MCF 10A (cell line): ENCODE measurements at regions of chr2 and their contacts with region 1.

Region 1: DNA sequence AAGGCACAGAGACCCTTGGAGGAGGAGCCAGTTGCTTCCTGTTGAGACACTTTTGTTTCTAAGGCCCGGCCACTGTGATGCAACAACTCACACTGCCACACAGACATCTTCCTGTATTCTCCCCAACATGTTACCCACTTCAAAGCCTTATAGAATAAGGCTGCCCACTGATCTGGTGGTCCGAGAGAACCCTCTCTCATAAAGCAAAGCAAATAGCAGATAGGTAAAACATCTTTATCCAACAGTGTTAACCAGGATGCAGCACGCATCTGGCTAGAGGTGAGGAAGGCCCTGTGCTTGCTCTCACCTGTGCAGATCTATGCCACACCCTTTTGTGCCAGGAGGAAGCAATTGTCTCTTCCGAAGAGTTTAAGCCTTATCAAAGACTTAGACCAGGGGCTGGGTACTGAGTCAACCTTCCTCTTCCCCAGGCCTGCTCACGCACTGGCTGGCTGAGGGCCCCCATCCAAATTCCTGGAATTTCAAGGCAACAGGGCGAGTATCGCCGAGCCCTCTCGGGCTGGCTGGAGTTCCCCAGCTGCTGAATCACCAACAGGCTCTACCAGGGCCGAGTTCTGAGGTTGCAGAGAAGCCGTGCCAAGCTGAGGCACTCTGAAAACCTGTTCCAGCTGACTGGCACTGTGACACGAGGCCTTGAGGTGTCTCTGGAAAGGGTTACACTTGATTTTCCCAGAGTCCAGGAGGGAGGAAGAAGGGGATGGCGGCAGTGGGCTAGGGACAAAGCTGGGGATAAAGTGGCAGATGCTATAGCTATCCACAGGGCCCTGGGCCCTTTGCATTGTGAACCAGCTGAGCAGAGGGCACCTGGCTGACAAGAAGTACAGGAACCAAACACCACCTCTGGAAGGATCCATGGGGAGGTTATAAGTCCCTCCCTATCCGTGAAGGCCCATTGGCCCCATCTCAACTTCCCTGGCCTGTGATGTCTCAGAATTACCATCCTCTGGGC is 29.3 kb downstream of the TGFA start:
- DNase-seq: peak; percentile 95
- H3K4me3 Mint-ChIP-seq: peak overlapping the region; percentile 49
- H3K27ac Mint-ChIP-seq: peak overlapping the region; percentile 84
- H3K4me1 Mint-ChIP-seq: peaks cover 43% of the 10 kb centered on the region
- H3K27me3 Mint-ChIP-seq: no peaks in the 10 kb centered on the region
- CTCF ChIP-seq: no peak

Region 2: GRCh38 chr2:70541481-70542020 is 17.3 kb after region 1 on chr2:
- CTCF ChIA-PET with region 1: interaction called, 5 read pairs
- POLR2A ChIA-PET with region 1: interaction called, 24 read pairs
- intact Hi-C with region 1: loop called (anchors 1 kb)
- DNase-seq: peak; percentile 87
- H3K4me3 Mint-ChIP-seq: peak overlapping the region; percentile 56
- H3K27ac Mint-ChIP-seq: peak overlapping the region; percentile 76
- H3K4me1 Mint-ChIP-seq: peaks cover 24% of the 10 kb centered on the region
- H3K27me3 Mint-ChIP-seq: no peaks in the 10 kb centered on the region
- CTCF ChIP-seq: peak; percentile 19

Region 3: GRCh38 chr2:70580352-70580751 is 56.1 kb after region 1 on chr2:
- CTCF ChIA-PET with region 1: no interaction called
- POLR2A ChIA-PET with region 1: no interaction called
- intact Hi-C with region 1: no loop called
- DNase-seq: no peak
- H3K4me3 Mint-ChIP-seq: no peak overlapping the region
- H3K27ac Mint-ChIP-seq: no peak overlapping the region
- H3K4me1 Mint-ChIP-seq: no peaks in the 10 kb centered on the region
- H3K27me3 Mint-ChIP-seq: no peaks in the 10 kb centered on the region
- CTCF ChIP-seq: no peak

Region 4: GRCh38 chr2:70627211-70627902 is 103.1 kb after region 1 on chr2:
- CTCF ChIA-PET with region 1: no interaction called
- POLR2A ChIA-PET with region 1: no interaction called
- intact Hi-C with region 1: no loop called
- DNase-seq: peak; percentile 72
- H3K4me3 Mint-ChIP-seq: no peak overlapping the region
- H3K27ac Mint-ChIP-seq: no peak overlapping the region
- H3K4me1 Mint-ChIP-seq: no peaks in the 10 kb centered on the region
- H3K27me3 Mint-ChIP-seq: peaks cover 2% of the 10 kb centered on the region
- CTCF ChIP-seq: no peak

Region 5: GRCh38 chr2:71410696-71411095 is 886.4 kb after region 1 on chr2:
- CTCF ChIA-PET with region 1: no interaction called
- POLR2A ChIA-PET with region 1: no interaction called
- intact Hi-C with region 1: no loop called
- DNase-seq: no peak
- H3K4me3 Mint-ChIP-seq: no peak overlapping the region
- H3K27ac Mint-ChIP-seq: no peak overlapping the region
- H3K4me1 Mint-ChIP-seq: no peaks in the 10 kb centered on the region
- H3K27me3 Mint-ChIP-seq: no peaks in the 10 kb centered on the region
- CTCF ChIP-seq: no peak